T-cell (primary cell): ENCODE measurements at regions of chr15 and their contacts with region 1.

Region 1: GRCh38 chr15:57611938-57612337 is 20.2 kb downstream of the MYZAP start:
- DNase-seq: peak in 1 of 35 experiments; percentile 4
- ATAC-seq: no peak
- H3K4me3 ChIP-seq: no peak overlapping the region
- H3K4me3 Mint-ChIP-seq: no peak overlapping the region
- H3K27ac ChIP-seq: no peak overlapping the region
- H3K27ac Mint-ChIP-seq: no peak overlapping the region
- H3K4me1 ChIP-seq: no peaks in the 10 kb centered on the region
- H3K4me1 Mint-ChIP-seq: no peaks in the 10 kb centered on the region
- H3K27me3 ChIP-seq: no peaks in the 10 kb centered on the region
- H3K27me3 Mint-ChIP-seq: peaks cover 0 to 5% of the 10 kb centered on the region in 2 donors

Region 2: DNA sequence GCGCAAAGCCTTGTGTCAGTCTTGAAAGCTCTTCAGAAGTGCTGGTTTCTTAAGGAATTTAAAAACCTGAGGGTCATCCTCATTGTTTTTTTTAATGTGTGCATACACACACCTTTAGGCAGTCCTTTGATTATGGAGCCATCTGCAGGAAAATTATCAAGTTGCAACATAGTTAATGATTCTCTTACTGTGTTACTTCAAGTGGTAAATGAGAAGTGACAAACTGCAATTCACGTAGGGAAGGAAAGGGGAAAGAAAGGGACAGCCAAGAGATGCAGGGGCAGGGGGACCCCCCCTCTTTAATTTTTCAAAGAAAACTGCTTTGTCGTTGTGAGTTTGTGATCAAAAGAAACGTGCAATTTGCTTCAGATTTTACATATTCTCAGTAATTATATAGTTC is 398.1 kb before region 1 on chr15:
- CTCF ChIA-PET with region 1: no interaction called
- POLR2A ChIA-PET with region 1: no interaction called
- DNase-seq: peak in 1 of 35 experiments; percentile 38
- ATAC-seq: peak in 1 of 4 experiments; percentile 42
- H3K4me3 ChIP-seq: no peak overlapping the region
- H3K4me3 Mint-ChIP-seq: no peak overlapping the region
- H3K27ac ChIP-seq: no peak overlapping the region
- H3K27ac Mint-ChIP-seq: no peak overlapping the region
- H3K4me1 ChIP-seq: peaks cover 0 to 9% of the 10 kb centered on the region in 2 experiments
- H3K4me1 Mint-ChIP-seq: peaks cover 18 to 40% (median 21%) of the 10 kb centered on the region in 3 donors
- H3K27me3 ChIP-seq: no peaks in the 10 kb centered on the region
- H3K27me3 Mint-ChIP-seq: no peaks in the 10 kb centered on the region

Region 3: DNA sequence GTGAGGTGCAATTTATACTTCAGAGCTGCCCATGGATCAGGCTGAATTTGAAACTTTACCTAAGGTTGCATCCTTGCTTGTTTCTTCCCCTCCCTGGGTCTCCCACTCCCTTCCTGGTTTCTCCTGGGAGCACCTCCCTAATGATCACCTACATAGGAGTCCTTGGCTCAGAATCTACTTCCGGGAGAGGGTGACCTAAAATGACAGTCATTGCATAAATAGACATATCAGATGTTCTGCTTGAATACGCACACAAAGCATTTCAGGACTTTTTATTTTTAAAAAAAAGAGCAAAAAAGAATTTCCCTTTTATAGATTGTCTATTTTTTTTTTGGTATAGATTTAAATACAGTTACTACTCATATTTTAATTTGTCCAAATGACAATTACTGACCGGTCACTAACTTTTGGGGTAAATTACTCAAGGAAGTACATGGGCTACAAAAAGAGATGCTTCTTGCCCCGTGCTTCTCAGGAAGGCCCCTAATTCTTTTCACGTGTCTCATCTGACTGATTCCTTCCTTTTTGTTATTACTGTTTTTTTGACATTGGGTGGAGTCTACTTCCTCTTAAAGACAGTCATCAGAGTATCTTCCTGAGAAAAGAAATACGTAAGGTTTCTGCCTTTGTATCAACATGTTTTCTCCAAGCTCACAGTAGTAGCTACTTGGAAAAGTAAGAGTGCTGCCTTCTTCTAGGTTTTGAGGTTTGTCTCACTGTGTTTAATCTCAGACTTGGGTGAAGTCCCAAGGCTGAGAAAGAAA is 25.1 kb before region 1 on chr15:
- CTCF ChIA-PET with region 1: no interaction called
- POLR2A ChIA-PET with region 1: no interaction called
- DNase-seq: peak in 1 of 35 experiments; percentile 31
- ATAC-seq: peak; percentile 41 to 84 (median 45)
- H3K4me3 ChIP-seq: no peak overlapping the region
- H3K4me3 Mint-ChIP-seq: peak overlapping the region in 2 of 3 donors; percentile 0 to 57
- H3K27ac ChIP-seq: peak overlapping the region; percentile 13
- H3K27ac Mint-ChIP-seq: peak overlapping the region; percentile 85 to 91
- H3K4me1 ChIP-seq: peaks cover 12 to 24% of the 10 kb centered on the region in 2 experiments
- H3K4me1 Mint-ChIP-seq: peaks cover 29 to 45% (median 45%) of the 10 kb centered on the region in 3 donors
- H3K27me3 ChIP-seq: peaks cover 0 to 17% of the 10 kb centered on the region in 2 experiments
- H3K27me3 Mint-ChIP-seq: peaks cover 21 to 23% of the 10 kb centered on the region in 2 donors

Region 4: GRCh38 chr15:57706405-57707209 is 94.7 kb after region 1 on chr15 and contains the start of gene POLR2M:
- CTCF ChIA-PET with region 1: no interaction called
- POLR2A ChIA-PET with region 1: interaction called in 1 of 2 experiments, 10 read pairs
- DNase-seq: peak; percentile 67 to 97 (median 91)
- ATAC-seq: peak; percentile 86 to 92 (median 88)
- H3K4me3 ChIP-seq: peak within 1 kb of the TSS; percentile 84 to 99
- H3K4me3 Mint-ChIP-seq: peak within 1 kb of the TSS; percentile 78 to 90 (median 83)
- H3K27ac ChIP-seq: peak within 1 kb of the TSS; percentile 98
- H3K27ac Mint-ChIP-seq: peak within 1 kb of the TSS; percentile 87 to 92
- H3K4me1 ChIP-seq: peaks cover 19 to 37% of the 10 kb centered on the region in 2 experiments
- H3K4me1 Mint-ChIP-seq: peaks cover 83 to 87% (median 86%) of the 10 kb centered on the region in 3 donors
- H3K27me3 ChIP-seq: no peaks in the 10 kb centered on the region
- H3K27me3 Mint-ChIP-seq: no peaks in the 10 kb centered on the region
- total RNA-seq, gene POLR2M: 85.7 to 98.0 (median 91.4) TPM